Endothelial cell of umbilical vein (primary cell): ENCODE measurements at regions of chr5 and their contacts with region 1.

Region 1: DNA sequence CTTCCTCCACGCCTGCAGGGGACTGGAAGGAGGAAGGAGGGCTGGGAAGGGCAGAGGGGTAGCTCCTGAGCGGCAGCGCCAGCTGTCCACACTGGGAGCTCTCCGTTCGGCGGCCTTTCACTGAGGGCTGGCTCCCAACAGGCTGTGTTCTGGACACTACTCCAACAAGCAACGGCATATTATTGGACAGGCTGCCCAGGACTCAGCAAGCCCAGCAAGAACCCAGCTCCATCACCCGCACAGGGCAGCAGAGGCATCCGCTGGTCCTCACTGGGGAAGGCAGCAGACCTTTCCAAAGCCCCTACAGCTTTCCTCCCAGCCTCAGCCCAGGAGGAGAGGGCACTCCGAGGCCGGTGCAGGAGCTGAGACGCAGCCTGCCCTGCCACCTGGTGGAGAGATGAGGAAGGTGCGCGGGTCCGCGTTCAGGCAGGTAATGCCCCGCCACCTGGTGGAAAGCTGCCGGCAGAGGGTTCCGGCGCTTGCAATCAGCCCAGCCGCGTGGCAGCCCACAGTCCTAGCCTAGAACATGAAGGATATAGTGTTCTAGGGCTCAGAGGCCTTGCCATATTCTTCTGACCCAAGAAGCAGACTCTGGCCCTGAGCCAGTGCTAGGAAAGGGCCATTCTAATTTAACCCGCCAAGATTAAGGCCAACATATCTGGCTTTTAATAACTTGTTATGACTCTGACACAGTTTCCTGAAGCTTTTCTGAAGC is 74.4 kb downstream of the NRG2 start:
- DNase-seq: peak; percentile 75
- H3K4me3 ChIP-seq: no peak overlapping the region
- H3K27ac ChIP-seq: no peak overlapping the region
- H3K4me1 ChIP-seq: no peaks in the 10 kb centered on the region
- H3K27me3 ChIP-seq: peaks cover 20 to 22% of the 10 kb centered on the region in 2 experiments
- CTCF ChIP-seq: peak; percentile 99 to 100
- POLR2A ChIP-seq: no peak

Region 2: GRCh38 chr5:139774980-139775661 is 193.6 kb before region 1 on chr5:
- CTCF ChIA-PET with region 1: interaction called, 20 read pairs
- POLR2A ChIA-PET with region 1: no interaction called
- dilution Hi-C with region 1: no loop called
- intact Hi-C with region 1: no loop called
- DNase-seq: peak; percentile 47
- H3K4me3 ChIP-seq: no peak overlapping the region
- H3K27ac ChIP-seq: no peak overlapping the region
- H3K4me1 ChIP-seq: no peaks in the 10 kb centered on the region
- H3K27me3 ChIP-seq: peaks cover 7 to 13% of the 10 kb centered on the region in 2 experiments
- CTCF ChIP-seq: peak; percentile 90 to 94
- POLR2A ChIP-seq: no peak

Region 3: DNA sequence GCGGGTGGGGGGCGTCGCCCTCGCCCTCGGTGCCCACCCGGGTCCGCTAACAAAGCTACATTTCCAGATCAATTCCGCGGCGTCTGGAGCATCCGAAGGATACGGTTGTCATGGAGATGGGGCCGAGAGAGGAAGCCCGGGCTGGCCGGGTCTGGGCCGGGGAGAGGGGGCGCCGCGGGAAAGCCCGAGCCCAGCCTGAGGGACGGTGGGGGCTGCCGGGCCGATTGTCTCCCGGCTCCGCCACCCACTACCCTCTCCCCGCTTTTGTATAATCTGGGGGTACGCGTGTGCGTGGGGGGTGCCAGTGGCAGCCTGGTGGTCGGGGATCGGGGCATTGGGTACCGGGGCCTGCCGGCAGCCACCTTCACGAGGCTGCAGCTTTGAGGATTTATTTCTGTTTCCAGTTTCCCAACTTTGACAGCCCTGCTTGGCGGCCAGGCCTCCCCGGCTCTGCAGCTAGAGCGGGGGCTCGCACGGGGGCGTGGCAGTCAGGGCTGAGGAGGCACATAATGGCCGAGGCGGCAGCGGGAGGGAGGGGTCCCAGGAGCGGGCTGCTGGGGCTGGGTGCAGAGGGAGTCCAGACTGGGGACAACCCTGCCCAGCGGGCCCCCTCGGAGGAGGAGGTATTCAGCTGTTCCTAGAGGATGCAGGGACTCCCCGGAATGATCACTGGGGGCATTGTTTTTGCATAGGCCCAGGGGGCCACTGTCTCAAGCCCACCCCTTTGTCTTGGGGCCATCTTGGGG is 172.5 kb before region 1 on chr5:
- CTCF ChIA-PET with region 1: interaction called, 17 read pairs
- POLR2A ChIA-PET with region 1: no interaction called
- dilution Hi-C with region 1: no loop called
- intact Hi-C with region 1: no loop called
- DNase-seq: no peak
- H3K4me3 ChIP-seq: no peak overlapping the region
- H3K27ac ChIP-seq: no peak overlapping the region
- H3K4me1 ChIP-seq: no peaks in the 10 kb centered on the region
- H3K27me3 ChIP-seq: peaks cover 48 to 49% of the 10 kb centered on the region in 2 experiments
- CTCF ChIP-seq: no peak
- POLR2A ChIP-seq: no peak

Region 4: DNA sequence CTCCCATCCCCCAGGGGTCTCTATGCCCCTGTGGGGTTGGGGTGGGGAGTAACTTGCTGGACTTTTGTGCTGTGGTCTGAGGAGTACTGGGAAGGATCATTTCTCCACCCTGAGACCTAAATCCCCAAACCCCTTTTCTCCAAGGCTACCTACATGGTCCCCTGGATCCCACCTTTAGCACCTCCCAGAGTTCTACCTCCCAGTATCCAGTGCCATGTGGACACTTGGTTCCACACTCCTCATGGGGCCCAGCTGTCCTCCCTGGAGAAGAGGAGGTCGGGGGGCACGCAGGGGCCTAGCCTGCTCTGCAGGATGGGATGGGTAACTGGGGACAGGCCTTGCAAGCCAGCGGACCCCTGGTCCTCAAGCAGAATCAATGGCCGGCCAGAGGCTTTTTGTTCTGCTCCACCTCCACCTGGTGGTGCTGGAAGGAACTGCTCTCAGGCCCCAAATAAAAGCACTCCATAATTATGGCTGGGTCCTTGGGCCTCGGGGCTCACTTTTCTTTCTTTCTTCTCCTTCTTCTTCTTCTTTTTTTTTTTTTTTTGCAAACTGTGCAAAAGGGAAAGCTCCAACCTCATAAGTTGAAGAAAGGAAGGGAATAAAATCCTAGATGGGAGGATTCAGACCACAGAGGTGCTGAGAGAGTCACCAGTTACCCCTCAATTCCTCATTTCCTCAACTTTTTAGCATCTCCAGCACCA is 104.7 kb before region 1 on chr5:
- CTCF ChIA-PET with region 1: interaction called, 19 read pairs
- POLR2A ChIA-PET with region 1: no interaction called
- dilution Hi-C with region 1: no loop called
- intact Hi-C with region 1: loop called (anchors 1 kb)
- DNase-seq: peak; percentile 57
- H3K4me3 ChIP-seq: no peak overlapping the region
- H3K27ac ChIP-seq: no peak overlapping the region
- H3K4me1 ChIP-seq: no peaks in the 10 kb centered on the region
- H3K27me3 ChIP-seq: peaks cover 6 to 12% of the 10 kb centered on the region in 2 experiments
- CTCF ChIP-seq: peak; percentile 75 to 88
- POLR2A ChIP-seq: no peak

Region 5: GRCh38 chr5:139880416-139881142 is 88.1 kb before region 1 on chr5:
- CTCF ChIA-PET with region 1: no interaction called
- POLR2A ChIA-PET with region 1: no interaction called
- dilution Hi-C with region 1: no loop called
- intact Hi-C with region 1: no loop called
- DNase-seq: no peak
- H3K4me3 ChIP-seq: no peak overlapping the region
- H3K27ac ChIP-seq: no peak overlapping the region
- H3K4me1 ChIP-seq: no peaks in the 10 kb centered on the region
- H3K27me3 ChIP-seq: peaks cover 0 to 3% of the 10 kb centered on the region in 2 experiments
- CTCF ChIP-seq: no peak
- POLR2A ChIP-seq: no peak

Region 6: DNA sequence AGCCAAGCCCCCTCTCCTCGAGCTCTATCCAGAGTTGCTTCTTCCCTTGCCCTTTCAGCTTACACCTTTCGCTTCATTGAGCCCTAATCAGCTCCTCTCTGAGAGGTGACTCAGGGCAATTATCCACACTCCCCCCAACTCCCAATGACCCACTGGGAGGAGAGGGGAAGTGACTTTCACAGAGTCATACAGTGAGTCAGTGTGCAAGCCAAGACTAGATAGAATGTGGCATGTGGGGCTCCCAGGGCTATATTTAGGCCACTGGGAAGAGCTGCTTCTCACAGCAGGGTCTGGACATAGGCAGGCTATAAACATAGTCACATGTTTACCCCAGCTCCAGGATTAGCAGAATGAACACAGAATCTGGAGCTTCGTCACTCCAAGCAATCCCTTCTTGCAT is 17.0 kb after region 1 on chr5:
- CTCF ChIA-PET with region 1: interaction called, 37 read pairs
- POLR2A ChIA-PET with region 1: no interaction called
- dilution Hi-C with region 1: no loop called
- intact Hi-C with region 1: no loop called
- DNase-seq: peak; percentile 39
- H3K4me3 ChIP-seq: no peak overlapping the region
- H3K27ac ChIP-seq: no peak overlapping the region
- H3K4me1 ChIP-seq: peaks cover 14% of the 10 kb centered on the region
- H3K27me3 ChIP-seq: peaks cover under 1 to 5% of the 10 kb centered on the region in 2 experiments
- CTCF ChIP-seq: no peak
- POLR2A ChIP-seq: no peak

Region 7: DNA sequence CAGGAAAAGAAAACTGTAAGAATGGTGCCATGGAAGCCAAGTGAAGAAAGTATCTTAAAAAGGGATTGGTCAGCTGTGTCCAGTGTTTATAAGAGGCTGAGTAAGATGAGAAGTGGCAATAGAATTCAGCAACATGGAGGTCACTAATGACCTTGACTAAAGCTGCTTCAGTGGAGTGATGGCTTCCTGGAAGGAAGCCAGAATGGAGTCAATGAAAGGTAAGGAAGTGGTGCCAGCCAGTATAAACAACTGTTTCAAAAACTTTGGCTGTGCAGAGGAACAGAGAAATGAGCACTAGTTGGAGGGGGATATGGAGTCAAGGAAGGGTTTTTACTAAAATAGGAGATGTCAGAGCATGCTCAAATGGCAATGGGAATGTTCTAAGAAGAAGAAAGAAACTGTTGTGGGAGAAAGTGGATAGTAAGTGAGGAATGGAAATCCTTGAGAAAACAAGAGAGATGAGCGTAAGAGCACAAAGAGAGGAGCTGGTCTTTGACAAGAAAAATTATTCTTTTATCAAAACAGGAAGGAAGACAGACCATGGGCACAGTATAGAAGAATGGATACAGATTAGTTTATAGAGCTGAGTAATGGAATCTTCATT is 85.5 kb after region 1 on chr5:
- CTCF ChIA-PET with region 1: interaction called, 13 read pairs
- POLR2A ChIA-PET with region 1: no interaction called
- dilution Hi-C with region 1: no loop called
- intact Hi-C with region 1: no loop called
- DNase-seq: peak; percentile 94
- H3K4me3 ChIP-seq: peak overlapping the region in 1 of 3 experiments; percentile 44
- H3K27ac ChIP-seq: no peak overlapping the region
- H3K4me1 ChIP-seq: peaks cover 16% of the 10 kb centered on the region
- H3K27me3 ChIP-seq: peaks cover 13 to 31% of the 10 kb centered on the region in 2 experiments
- CTCF ChIP-seq: no peak
- POLR2A ChIP-seq: no peak